ENCODE measurements at regions of chr5 and their contacts with region 1.

Region 1: DNA sequence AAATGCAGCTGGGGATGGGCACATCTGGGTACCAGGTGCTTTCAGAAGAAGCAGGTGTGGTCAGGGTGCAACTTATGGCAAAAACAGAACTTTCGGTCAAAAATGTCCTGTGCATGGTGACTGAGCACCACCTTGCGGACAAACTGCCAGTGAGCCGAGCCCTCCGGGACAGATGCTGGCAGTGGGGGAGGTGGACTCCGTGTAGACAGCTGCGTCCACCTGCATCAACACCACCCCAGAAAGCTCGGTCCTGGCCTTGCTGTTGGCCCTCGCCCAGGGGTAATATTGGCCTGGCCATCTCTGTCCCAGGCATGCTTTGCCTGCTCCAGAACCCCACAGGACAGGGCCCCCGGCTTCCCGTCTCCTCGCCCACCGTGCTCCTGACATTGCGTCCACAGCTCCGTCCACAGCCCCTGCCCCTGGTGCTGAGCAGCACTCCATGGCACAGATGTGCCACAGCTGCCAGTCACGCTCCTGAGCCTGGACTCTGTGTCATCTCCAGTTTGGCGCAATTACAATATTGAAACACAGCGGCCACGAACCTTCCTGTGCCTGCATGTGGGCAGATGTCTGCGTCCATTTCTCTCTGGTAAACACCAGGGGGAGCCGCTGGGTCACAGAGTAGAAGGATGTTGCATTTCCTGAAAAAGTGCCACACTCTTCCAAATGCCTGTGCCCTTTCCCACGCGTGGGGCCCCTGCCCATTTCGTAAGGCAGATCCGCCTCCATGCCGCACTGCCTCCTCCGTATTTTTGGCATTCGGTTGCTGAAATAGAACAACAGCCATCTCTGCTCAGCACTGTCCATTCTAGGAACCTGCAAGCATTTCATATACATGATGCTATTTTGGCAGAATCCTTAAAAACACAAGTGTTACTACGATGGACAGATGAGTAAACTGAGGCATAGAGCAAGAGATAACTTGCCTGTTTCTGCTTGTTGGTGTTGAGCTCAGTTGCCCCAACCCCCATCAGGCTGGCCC is 33.4 kb upstream of the SLC6A19 start:
- DNase-seq: no peak
- H3K4me3 ChIP-seq: peak overlapping the region in 2 of 4 donors; percentile 14 to 43
- H3K27ac ChIP-seq: no peak overlapping the region
- H3K4me1 ChIP-seq: peaks cover 8 to 11% (median 8%) of the 10 kb centered on the region in 3 donors
- H3K27me3 ChIP-seq: peaks cover 0 to 52% (median 0%) of the 10 kb centered on the region in 4 donors
- CTCF ChIP-seq: peak; percentile 47 to 78 (median 64)
- POLR2A ChIP-seq: no peak

Region 2: GRCh38 chr5:923281-923873 is 244.6 kb before region 1 on chr5:
- intact Hi-C with region 1: loop called (anchors 10 kb)
- DNase-seq: no peak
- H3K4me3 ChIP-seq: no peak overlapping the region
- H3K27ac ChIP-seq: no peak overlapping the region
- H3K4me1 ChIP-seq: peaks cover 5 to 18% (median 9%) of the 10 kb centered on the region in 3 donors
- H3K27me3 ChIP-seq: peaks cover 0 to 49% (median 0%) of the 10 kb centered on the region in 4 donors
- CTCF ChIP-seq: peak; percentile 67 to 88 (median 81)
- POLR2A ChIP-seq: no peak

Region 3: DNA sequence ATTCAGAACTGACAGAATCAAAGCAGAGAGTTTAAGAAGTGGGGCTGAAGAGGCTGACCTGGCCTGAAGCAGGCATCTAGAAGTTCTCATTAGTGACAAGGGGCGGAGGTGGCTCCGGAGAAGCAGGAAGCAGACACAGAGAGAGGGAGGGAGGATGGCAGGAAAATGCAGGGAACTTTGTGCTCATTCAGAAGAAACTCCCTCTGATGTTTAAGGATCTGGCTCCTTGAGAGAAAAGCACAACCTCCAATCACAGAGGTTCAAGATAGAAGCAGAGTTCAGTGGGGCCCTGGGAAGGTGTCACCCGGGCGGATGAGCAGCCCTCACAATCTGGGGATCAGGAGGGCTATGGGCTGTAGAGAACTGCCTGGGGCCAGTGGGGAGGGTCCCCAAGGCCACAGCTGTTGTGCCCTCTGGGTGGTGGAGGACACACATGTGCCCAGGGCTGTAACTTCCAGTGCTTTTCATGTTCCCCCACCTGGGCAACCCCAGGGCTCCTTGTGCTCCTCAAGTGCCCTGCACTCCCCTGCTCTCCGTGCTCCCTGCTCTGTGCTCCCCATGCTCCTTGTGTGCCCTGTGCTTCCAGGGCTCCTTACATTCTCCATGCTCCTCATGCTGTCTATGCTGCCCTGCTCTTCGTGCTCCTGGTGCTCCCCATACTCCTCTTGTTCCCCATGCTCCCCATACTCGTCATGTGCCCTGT is 223.9 kb before region 1 on chr5:
- intact Hi-C with region 1: no loop called
- DNase-seq: no peak
- H3K4me3 ChIP-seq: no peak overlapping the region
- H3K27ac ChIP-seq: no peak overlapping the region
- H3K4me1 ChIP-seq: peaks cover 0 to 18% (median 0%) of the 10 kb centered on the region in 3 donors
- H3K27me3 ChIP-seq: peaks cover 0 to 88% (median 0%) of the 10 kb centered on the region in 4 donors
- CTCF ChIP-seq: no peak
- POLR2A ChIP-seq: no peak

Region 4: GRCh38 chr5:1641560-1642166 is 473.6 kb after region 1 on chr5:
- intact Hi-C with region 1: loop called (anchors 5 kb)
- DNase-seq: peak; percentile 41
- H3K4me3 ChIP-seq: no peak overlapping the region
- H3K27ac ChIP-seq: no peak overlapping the region
- H3K4me1 ChIP-seq: peaks cover 0 to 17% (median 7%) of the 10 kb centered on the region in 3 donors
- H3K27me3 ChIP-seq: peaks cover 7 to 45% (median 10%) of the 10 kb centered on the region in 4 donors
- CTCF ChIP-seq: peak; percentile 64 to 91 (median 86)
- POLR2A ChIP-seq: no peak